Heart left ventricle (tissue), 16 donors: ENCODE measurements at regions of chr19 and their contacts with region 1.

Region 1: GRCh38 chr19:4375164-4376027 is 25.0 kb downstream of the SH3GL1 start:
- DNase-seq: peak in 2 of 5 donors; percentile 36 to 50
- ATAC-seq: peak in 2 of 4 donors; percentile 1 to 3
- H3K4me3 ChIP-seq: no peak overlapping the region
- H3K27ac ChIP-seq: peak overlapping the region; percentile 72 to 94 (median 82)
- H3K4me1 ChIP-seq: peaks cover 24 to 96% (median 82%) of the 10 kb centered on the region in 12 donors
- H3K27me3 ChIP-seq: no peaks in the 10 kb centered on the region
- CTCF ChIP-seq: peak in 2 of 12 donors; percentile 20 to 28
- POLR2A ChIP-seq: no peak

Region 2: DNA sequence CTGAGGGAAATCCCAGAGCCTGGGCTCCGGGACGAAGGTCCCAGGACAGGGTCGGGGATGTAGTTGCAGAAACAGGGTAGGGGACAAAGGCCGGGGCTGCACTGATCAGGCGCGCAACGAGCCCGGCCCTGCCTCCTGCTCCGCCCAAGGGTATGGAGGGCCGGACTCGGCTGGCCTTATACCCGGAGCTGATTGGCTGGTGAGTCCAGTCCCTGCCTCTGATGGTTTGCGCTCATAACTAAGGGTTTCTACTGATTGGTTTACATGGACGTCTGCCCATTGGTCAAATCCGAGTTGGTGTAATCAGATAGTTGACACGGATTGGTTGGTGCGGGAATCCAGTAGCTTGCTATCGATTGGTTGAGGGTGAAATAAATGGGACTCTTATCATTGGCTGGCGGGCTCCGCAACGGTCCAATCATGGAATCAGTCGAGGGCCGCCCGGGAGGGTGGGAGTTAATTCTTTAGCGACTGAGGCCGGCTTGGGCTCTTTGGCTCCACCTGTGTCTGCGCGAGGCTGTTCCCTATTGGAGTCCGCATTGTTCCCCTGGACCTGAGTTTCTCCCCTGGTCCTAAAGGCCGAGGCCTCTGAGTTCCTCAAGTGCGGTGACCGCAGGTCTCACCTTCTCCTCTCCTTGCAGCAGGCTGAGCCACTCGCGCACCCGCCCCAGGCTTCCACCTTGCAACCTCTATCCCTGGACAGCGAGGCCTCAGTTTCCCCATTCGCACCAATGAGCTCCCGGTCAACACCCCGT is 32.6 kb before region 1 on chr19:
- intact Hi-C with region 1: loop called in 1 of 10 experiments (anchors 2 kb)
- DNase-seq: peak; percentile 96 to 99 (median 97)
- ATAC-seq: peak; percentile 94 to 98 (median 96)
- H3K4me3 ChIP-seq: peak overlapping the region; percentile 38 to 100 (median 76)
- H3K27ac ChIP-seq: peak overlapping the region; percentile 70 to 99 (median 92)
- H3K4me1 ChIP-seq: peaks cover 0 to 27% (median 15%) of the 10 kb centered on the region in 12 donors
- H3K27me3 ChIP-seq: no peaks in the 10 kb centered on the region
- CTCF ChIP-seq: peak in 7 of 12 donors; percentile 7 to 54 (median 39)
- POLR2A ChIP-seq: peak; percentile 47 to 93

Region 3: DNA sequence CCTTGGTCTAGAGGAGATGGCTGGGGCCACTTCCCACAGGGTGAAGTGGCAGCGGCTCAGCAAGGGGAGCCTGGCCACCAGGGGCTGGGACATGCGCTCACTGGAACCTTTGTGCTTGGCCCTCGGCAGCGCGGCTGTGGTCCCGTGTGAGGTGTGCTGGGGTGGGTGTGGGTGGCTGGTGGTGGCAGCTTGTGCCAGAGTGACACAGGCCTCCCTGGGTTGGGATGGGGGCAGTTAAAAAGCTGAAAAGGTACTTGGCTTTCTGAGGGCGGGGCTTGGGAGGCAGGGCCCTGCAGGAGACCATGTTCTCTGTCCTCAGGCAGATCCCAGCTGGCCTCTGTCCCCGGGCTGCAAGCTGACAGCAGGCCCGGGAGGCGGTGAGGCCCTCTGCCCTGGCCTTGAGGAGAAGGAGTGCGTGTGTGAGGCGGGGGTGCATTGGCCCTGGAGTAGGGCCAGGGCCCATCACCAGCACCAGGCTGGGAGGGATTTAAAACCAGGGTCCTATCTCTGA is 14.7 kb before region 1 on chr19:
- intact Hi-C with region 1: no loop called
- DNase-seq: no peak
- ATAC-seq: no peak
- H3K4me3 ChIP-seq: no peak overlapping the region
- H3K27ac ChIP-seq: no peak overlapping the region
- H3K4me1 ChIP-seq: no peaks in the 10 kb centered on the region
- H3K27me3 ChIP-seq: no peaks in the 10 kb centered on the region
- CTCF ChIP-seq: no peak
- POLR2A ChIP-seq: no peak

Region 4: GRCh38 chr19:4391701-4392483 is 16.5 kb after region 1 on chr19:
- intact Hi-C with region 1: loop called in 1 of 10 experiments (anchors 2 kb)
- DNase-seq: peak; percentile 58 to 77 (median 68)
- ATAC-seq: peak; percentile 16 to 69 (median 50)
- H3K4me3 ChIP-seq: peak overlapping the region in 4 of 12 donors; percentile 5 to 18 (median 6)
- H3K27ac ChIP-seq: peak overlapping the region; percentile 57 to 87 (median 78)
- H3K4me1 ChIP-seq: peaks cover 4 to 86% (median 75%) of the 10 kb centered on the region in 12 donors
- H3K27me3 ChIP-seq: no peaks in the 10 kb centered on the region
- CTCF ChIP-seq: no peak
- POLR2A ChIP-seq: no peak